ENCODE measurements at regions of chr4 and their contacts with region 1.

Region 1: GRCh38 chr4:1266881-1267763 is 18.2 kb upstream of the CTBP1 start:
- DNase-seq: no peak
- H3K4me3 ChIP-seq: no peak overlapping the region
- H3K27ac ChIP-seq: no peak overlapping the region
- H3K4me1 ChIP-seq: no peaks in the 10 kb centered on the region
- H3K27me3 ChIP-seq: no peaks in the 10 kb centered on the region
- CTCF ChIP-seq: no peak
- EP300 ChIP-seq: no peak
- POLR2A ChIP-seq: no peak

Region 2: DNA sequence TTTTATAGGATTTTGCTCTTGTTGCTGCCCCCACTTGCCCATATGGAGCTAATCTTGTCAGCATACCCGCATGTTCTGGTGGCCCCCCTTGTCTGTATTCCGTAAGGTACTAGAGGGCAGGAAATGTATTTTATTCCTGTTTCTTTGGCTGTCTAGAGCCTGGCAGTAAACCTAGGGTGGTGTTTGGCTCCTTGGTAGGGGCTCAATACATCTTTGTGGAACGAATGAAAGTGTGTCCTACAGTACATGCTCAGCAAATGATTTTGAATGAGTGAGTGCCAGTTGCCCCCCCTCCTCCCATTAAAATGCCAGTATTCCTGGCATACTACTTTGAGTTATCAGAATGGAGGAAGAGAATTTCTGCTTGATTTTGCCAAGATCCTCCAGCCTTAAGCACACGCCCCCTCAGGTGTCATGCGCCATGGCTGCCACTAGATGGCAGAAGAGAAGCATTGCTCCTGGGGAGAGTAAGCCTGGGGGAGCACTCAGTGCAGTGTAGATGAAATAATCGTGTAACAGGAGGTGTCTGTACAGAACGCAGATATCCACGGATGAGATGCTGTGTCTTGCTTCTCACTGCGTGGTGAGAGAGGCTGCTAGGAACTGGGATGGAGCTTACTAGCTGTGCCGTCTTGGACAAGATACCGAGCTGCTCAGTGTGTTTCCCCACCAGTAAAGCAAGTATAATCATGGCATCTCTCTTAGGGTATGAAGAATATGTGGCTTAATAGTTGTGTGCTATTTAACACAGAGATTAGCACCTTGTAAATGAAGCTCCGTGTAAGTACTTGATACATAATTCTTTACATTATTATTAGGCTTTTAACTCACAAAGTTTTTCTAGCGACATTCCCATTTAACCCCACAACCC is 136.6 kb before region 1 on chr4:
- intact Hi-C with region 1: loop called (anchors 2 kb)
- DNase-seq: peak; percentile 82
- H3K4me3 ChIP-seq: no peak overlapping the region
- H3K27ac ChIP-seq: no peak overlapping the region
- H3K4me1 ChIP-seq: peaks cover 0 to 10% (median 3%) of the 10 kb centered on the region in 4 donors
- H3K27me3 ChIP-seq: no peaks in the 10 kb centered on the region
- CTCF ChIP-seq: peak; percentile 96 to 99 (median 97)
- EP300 ChIP-seq: no peak
- POLR2A ChIP-seq: no peak

Region 3: GRCh38 chr4:1209821-1210210 is 57.3 kb before region 1 on chr4:
- intact Hi-C with region 1: no loop called
- DNase-seq: peak; percentile 94
- H3K4me3 ChIP-seq: no peak overlapping the region
- H3K27ac ChIP-seq: peak overlapping the region; percentile 68 to 79 (median 74)
- H3K4me1 ChIP-seq: peaks cover 0 to 67% (median 61%) of the 10 kb centered on the region in 4 donors
- H3K27me3 ChIP-seq: no peaks in the 10 kb centered on the region
- CTCF ChIP-seq: no peak
- EP300 ChIP-seq: no peak
- POLR2A ChIP-seq: peak in 1 of 2 donors; percentile 14

Region 4: GRCh38 chr4:1469607-1470392 is 202.7 kb after region 1 on chr4:
- intact Hi-C with region 1: no loop called
- DNase-seq: no peak
- H3K4me3 ChIP-seq: no peak overlapping the region
- H3K27ac ChIP-seq: no peak overlapping the region
- H3K4me1 ChIP-seq: peaks cover 0 to 11% (median 8%) of the 10 kb centered on the region in 4 donors
- H3K27me3 ChIP-seq: peaks cover 16 to 65% (median 52%) of the 10 kb centered on the region in 3 donors
- CTCF ChIP-seq: no peak
- EP300 ChIP-seq: no peak
- POLR2A ChIP-seq: no peak